Gastrocnemius medialis (tissue), 4 donors: ENCODE measurements at regions of chr10 and their contacts with region 1.

Region 1: GRCh38 chr10:85995791-85996190 is 370.8 kb downstream of the GRID1 start:
- DNase-seq: no peak
- ATAC-seq: peak in 1 of 2 donors; percentile 54
- H3K4me3 ChIP-seq: no peak overlapping the region
- H3K27ac ChIP-seq: no peak overlapping the region
- H3K4me1 ChIP-seq: no peaks in the 10 kb centered on the region
- H3K27me3 ChIP-seq: no peaks in the 10 kb centered on the region
- CTCF ChIP-seq: peak in 3 of 5 experiments; percentile 26 to 50 (median 50)
- POLR2A ChIP-seq: no peak

Region 2: GRCh38 chr10:86366033-86366901 is 370.5 kb after region 1 on chr10 and contains the start of gene GRID1:
- in situ Hi-C with region 1: loop called in 1 of 4 experiments (anchors 25 kb)
- intact Hi-C with region 1: loop called (anchors 5 kb)
- DNase-seq: peak in 1 of 2 donors; percentile 9
- ATAC-seq: peak; percentile 35
- H3K4me3 ChIP-seq: peak within 1 kb of the TSS; percentile 51 to 61 (median 54)
- H3K27ac ChIP-seq: no peak within 1 kb of the TSS
- H3K4me1 ChIP-seq: peaks cover 0 to 21% of the 10 kb centered on the region in 2 donors
- H3K27me3 ChIP-seq: peaks cover 49 to 57% (median 49%) of the 10 kb centered on the region in 3 donors
- CTCF ChIP-seq: no peak
- POLR2A ChIP-seq: no peak
- total RNA-seq, gene GRID1: 0.17 to 1.4 (median 0.79) TPM